ENCODE measurements at regions of chr2 and their contacts with region 1.

Region 1: DNA sequence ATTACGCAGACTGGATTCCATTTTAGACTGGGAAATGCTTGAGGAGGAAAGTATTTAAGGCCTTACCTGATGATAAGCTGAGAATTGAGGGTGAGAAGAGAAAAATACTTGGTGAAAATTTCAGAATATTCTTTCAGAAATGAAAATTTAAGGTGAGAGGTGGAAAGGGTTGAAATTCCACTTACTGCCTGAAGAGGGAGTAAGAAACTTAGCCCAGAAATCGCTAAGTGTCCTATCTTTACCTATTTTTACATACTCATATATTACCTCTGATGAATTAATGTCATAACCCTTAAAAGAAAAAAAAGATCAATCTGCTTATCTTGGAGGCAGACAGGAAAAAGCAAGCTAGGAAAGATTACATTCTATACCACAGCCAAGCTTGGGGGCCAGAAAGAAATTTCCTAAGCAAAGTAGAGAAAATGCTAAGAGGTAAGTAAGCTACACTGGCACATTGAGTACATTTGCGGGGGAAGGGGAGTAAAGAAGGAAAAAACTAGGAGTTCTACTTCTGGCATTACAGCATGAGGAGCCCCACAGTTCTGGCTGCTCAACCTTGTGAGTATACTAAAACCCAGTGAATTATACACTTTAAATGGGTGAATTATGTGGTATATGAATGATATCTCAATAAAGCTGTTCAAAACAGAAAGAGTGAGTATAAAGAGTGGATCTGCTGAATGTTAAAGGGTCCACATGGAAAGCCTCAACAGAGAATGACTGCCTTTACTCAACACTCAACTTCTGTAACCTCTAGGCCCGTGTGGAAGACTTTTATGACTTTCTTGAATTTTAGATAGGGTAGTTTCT is 33.8 kb downstream of the SMC6 start:
- DNase-seq: peak; percentile 16 to 38
- ATAC-seq: peak; percentile 73 to 84; a peak in 5 of 6 replicates
- H3K4me3 ChIP-seq: no peak overlapping the region
- H3K27ac ChIP-seq: no peak overlapping the region
- H3K4me1 ChIP-seq: no peaks in the 10 kb centered on the region
- CTCF ChIP-seq: peak; percentile 85
- EP300 ChIP-seq: no peak
- POLR2A ChIP-seq: no peak
- RAD21 ChIP-seq: peak; percentile 65 to 69

Region 2: DNA sequence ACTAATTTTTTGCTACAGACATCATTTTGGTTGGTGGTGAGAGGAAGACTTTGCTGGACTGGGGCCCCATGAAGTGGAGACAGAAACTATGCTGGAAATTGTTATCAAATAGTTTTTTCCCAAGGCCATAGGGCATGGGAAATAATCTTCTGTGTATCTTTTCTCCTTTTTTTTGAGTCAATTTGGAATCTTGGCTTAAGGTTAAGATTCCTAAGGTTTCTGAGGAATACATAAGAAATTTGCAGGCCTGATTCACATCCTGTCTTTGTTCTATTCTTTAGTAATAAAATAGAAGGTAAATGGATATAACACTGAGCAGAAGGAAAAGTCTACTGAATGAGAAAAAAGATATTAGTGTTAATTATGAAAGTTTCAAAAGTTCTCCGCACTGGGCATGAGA is 17.2 kb after region 1 on chr2:
- CTCF ChIA-PET with region 1: interaction called, 31 read pairs
- POLR2A ChIA-PET with region 1: no interaction called
- DNase-seq: no peak
- ATAC-seq: no peak
- H3K4me3 ChIP-seq: no peak overlapping the region
- H3K27ac ChIP-seq: no peak overlapping the region
- H3K4me1 ChIP-seq: no peaks in the 10 kb centered on the region
- CTCF ChIP-seq: no peak
- EP300 ChIP-seq: no peak
- POLR2A ChIP-seq: no peak
- RAD21 ChIP-seq: no peak

Region 3: DNA sequence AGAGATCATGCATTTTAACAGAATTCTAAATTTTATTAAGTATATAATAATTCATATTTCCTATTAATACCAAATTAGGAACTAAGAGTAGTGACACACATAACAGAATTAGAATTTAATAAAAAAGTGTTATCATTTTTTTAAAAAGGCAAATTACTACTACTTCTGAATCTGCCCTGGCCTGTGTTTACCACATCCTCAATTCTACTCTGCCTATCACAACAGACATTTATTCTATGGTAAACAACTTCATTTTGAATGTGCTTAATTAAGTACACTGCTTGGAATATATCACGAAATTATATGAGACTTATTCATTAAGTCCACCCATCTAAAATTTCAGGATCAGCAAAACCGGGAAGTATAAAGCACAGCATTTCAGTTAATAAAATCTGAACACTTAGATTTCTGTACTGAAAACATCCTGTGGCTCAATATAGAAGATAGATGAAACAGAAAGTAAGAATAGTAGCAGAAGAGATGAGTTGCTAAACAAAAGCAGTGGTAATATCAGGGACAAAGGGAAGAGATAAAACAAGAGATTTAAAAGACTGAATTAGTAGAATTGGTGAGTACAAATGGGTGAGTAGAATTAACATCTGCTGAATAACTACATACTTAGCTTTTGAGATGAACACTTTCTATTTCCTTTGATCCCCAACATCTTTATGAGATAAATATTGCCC is 30.1 kb after region 1 on chr2:
- CTCF ChIA-PET with region 1: interaction called, 10 read pairs
- POLR2A ChIA-PET with region 1: no interaction called
- DNase-seq: no peak
- ATAC-seq: no peak
- H3K4me3 ChIP-seq: no peak overlapping the region
- H3K27ac ChIP-seq: peak overlapping the region; percentile 59 to 61; a peak in 5 of 6 replicates
- H3K4me1 ChIP-seq: peaks cover 66% of the 10 kb centered on the region
- CTCF ChIP-seq: no peak
- EP300 ChIP-seq: no peak
- POLR2A ChIP-seq: no peak
- RAD21 ChIP-seq: no peak